A549 (cell line): ENCODE measurements at regions of chr17 and their contacts with region 1.

Region 1: DNA sequence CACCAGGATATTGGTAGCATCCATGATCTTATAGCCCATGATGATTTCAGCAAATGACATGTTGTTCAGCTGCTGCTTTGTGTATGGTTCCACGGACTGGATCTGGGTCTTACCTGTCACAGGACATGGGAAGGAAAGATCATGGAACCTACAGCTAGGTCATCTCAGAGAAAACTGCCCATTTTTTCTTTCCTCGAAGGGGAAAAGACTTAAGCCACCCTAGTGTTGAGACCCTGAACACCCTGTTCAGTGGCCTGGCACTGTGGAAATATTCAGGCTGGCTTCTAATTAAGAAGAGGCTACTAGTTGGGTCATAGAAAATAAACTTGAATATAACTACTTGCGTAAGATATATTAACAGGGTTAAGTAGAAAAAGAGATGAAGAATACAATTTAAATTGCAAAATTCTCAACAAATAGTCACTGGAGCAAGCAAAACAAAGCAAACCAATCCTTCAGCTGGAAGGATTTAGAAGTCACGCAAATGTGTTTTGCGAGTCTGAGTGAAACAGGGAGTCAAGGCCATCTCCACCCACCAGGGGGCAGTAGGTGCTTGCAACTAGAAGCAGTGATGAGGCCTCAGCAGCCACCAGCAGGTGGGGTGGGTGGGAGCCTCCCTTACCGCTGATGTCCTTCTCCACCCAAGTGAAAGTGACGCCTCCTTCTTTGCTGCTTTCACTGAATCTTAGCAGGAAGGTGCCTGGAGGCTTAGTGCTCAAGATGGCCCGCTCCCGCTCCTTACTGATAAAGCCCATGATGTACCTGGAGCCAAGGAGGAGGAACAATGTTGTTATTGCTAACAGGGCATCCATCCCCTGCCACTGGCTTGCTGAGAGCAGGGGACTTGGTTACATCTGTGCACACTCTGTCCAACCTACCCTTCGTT is 34.3 kb downstream of the STAT5A start:
- DNase-seq: peak; percentile 97 to 98
- ATAC-seq: peak; percentile 83 to 87
- H3K4me3 ChIP-seq: no peak overlapping the region
- H3K27ac ChIP-seq: peak overlapping the region; percentile 59 to 89
- H3K4me1 ChIP-seq: peaks cover 51% of the 10 kb centered on the region
- CTCF ChIP-seq: peak; percentile 100
- EP300 ChIP-seq: no peak
- POLR2A ChIP-seq: no peak
- RAD21 ChIP-seq: peak; percentile 100

Region 2: DNA sequence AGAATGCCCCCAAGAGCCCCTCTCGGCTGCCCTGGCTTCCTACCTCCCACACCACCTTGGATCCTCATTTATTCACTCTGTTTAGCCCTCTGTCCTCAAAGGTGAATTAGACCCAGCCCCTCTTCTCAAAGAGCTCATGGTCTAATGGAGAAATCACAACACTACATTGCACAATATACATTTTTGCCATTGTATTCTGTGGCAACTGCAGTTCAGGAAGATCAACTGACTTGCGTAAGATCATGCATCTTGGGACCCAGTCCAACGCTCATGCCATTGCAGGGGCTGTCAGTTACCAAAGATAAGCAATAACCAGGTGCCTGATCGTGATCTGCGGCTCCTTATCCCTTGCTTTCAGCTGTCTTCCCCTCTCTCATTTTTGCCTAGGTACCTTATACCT is 883.2 kb before region 1 on chr17:
- CTCF ChIA-PET with region 1: no interaction called
- POLR2A ChIA-PET with region 1: no interaction called
- DNase-seq: no peak
- ATAC-seq: no peak
- H3K4me3 ChIP-seq: no peak overlapping the region
- H3K27ac ChIP-seq: no peak overlapping the region
- H3K4me1 ChIP-seq: no peaks in the 10 kb centered on the region
- CTCF ChIP-seq: no peak
- EP300 ChIP-seq: no peak
- POLR2A ChIP-seq: no peak
- RAD21 ChIP-seq: no peak

Region 3: GRCh38 chr17:42034059-42034458 is 288.6 kb before region 1 on chr17:
- CTCF ChIA-PET with region 1: no interaction called
- POLR2A ChIA-PET with region 1: no interaction called
- DNase-seq: no peak
- ATAC-seq: no peak
- H3K4me3 ChIP-seq: no peak overlapping the region
- H3K27ac ChIP-seq: no peak overlapping the region
- H3K4me1 ChIP-seq: no peaks in the 10 kb centered on the region
- CTCF ChIP-seq: no peak
- EP300 ChIP-seq: no peak
- POLR2A ChIP-seq: no peak
- RAD21 ChIP-seq: no peak

Region 4: GRCh38 chr17:42078396-42079043 is 244.1 kb before region 1 on chr17:
- CTCF ChIA-PET with region 1: no interaction called
- POLR2A ChIA-PET with region 1: no interaction called
- DNase-seq: no peak
- ATAC-seq: no peak
- H3K4me3 ChIP-seq: no peak overlapping the region
- H3K27ac ChIP-seq: no peak overlapping the region
- H3K4me1 ChIP-seq: peaks cover 9% of the 10 kb centered on the region; the same call in 1 of the 3 replicates
- CTCF ChIP-seq: no peak
- EP300 ChIP-seq: no peak
- POLR2A ChIP-seq: no peak
- RAD21 ChIP-seq: no peak

Region 5: DNA sequence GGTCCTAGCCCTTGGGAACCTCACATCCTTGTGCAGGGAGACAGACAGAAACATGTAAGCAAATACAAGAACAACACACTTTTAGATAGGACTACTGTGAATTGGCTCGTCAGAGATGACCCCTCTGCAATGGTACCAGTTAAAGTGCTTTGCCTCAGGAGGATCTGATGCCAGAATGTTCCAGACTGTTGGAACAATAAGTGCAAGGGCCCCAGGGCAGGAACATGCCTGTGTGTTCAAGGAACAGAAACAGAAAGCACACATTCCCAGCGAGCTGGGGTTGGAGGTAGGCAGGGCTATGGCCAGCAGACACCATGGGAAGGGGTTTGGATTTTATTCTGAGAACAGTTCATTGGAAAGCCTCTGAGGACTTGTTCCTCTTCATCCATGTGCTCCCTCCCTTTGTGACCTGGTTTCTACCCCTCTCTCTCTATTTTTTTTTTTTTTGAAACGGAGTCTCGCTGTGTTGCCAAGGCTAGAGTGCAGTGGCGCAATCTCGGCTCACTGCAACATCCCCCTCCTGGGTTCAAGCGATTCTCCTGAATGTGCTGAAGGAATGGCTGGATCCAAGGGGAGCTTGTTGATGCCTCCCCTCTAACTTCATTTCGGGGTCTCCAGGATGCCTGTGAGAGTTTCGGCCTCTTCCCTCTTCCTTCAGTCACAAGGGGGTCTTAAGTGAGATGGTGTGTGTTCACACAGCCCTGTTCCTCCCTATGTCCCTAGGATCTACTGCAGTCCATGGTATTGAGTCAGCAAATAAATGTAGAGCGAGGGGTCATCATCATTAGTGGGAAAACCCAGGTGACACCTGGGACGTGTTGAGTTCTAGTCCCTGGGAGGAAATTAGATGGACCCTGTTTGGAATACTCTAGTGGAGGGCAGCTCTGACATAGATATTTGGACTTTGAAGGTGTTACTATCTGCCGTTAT is 27.9 kb before region 1 on chr17:
- CTCF ChIA-PET with region 1: interaction called, 12 read pairs
- POLR2A ChIA-PET with region 1: no interaction called
- DNase-seq: no peak
- ATAC-seq: no peak
- H3K4me3 ChIP-seq: no peak overlapping the region
- H3K27ac ChIP-seq: peak overlapping the region in 1 of 2 experiments; percentile 1; a peak in 1 of 6 replicates
- H3K4me1 ChIP-seq: no peaks in the 10 kb centered on the region
- CTCF ChIP-seq: no peak
- EP300 ChIP-seq: no peak
- POLR2A ChIP-seq: no peak
- RAD21 ChIP-seq: no peak

Region 6: GRCh38 chr17:42347198-42347597 is 24.6 kb after region 1 on chr17:
- CTCF ChIA-PET with region 1: interaction called, 15 read pairs
- POLR2A ChIA-PET with region 1: no interaction called
- DNase-seq: peak in 1 of 2 experiments; percentile 37
- ATAC-seq: peak; percentile 54 to 74; a peak in 3 of 6 replicates
- H3K4me3 ChIP-seq: no peak overlapping the region
- H3K27ac ChIP-seq: peak overlapping the region in 1 of 2 experiments; percentile 53; a peak in 3 of 6 replicates
- H3K4me1 ChIP-seq: peaks cover 28% of the 10 kb centered on the region
- CTCF ChIP-seq: no peak
- EP300 ChIP-seq: no peak
- POLR2A ChIP-seq: no peak
- RAD21 ChIP-seq: no peak

Region 7: GRCh38 chr17:42378597-42379594 is 56.3 kb after region 1 on chr17:
- CTCF ChIA-PET with region 1: interaction called, 1,360 read pairs
- POLR2A ChIA-PET with region 1: no interaction called
- DNase-seq: no peak
- ATAC-seq: peak; percentile 66 to 73
- H3K4me3 ChIP-seq: peak overlapping the region; percentile 24
- H3K27ac ChIP-seq: peak overlapping the region; percentile 45 to 81
- H3K4me1 ChIP-seq: peaks cover 26% of the 10 kb centered on the region
- CTCF ChIP-seq: no peak
- EP300 ChIP-seq: no peak
- POLR2A ChIP-seq: no peak
- RAD21 ChIP-seq: no peak

Region 8: GRCh38 chr17:42422958-42423712 is 100.5 kb after region 1 on chr17 and contains the start of gene CAVIN1:
- CTCF ChIA-PET with region 1: interaction called, 33 read pairs
- POLR2A ChIA-PET with region 1: interaction called, 14 read pairs
- DNase-seq: peak; percentile 97 to 99
- ATAC-seq: peak; percentile 71 to 86
- H3K4me3 ChIP-seq: peak within 1 kb of the TSS; percentile 93
- H3K27ac ChIP-seq: peak within 1 kb of the TSS; percentile 93 to 95
- H3K4me1 ChIP-seq: peaks cover 45% of the 10 kb centered on the region
- CTCF ChIP-seq: no peak
- EP300 ChIP-seq: no peak
- POLR2A ChIP-seq: peak; percentile 99
- RAD21 ChIP-seq: peak in 1 of 2 experiments; percentile 18; a peak in 1 of 5 replicates
- polyA plus RNA-seq, gene CAVIN1: 91.4 and 101 TPM in 2 replicates